B cell (primary cell): ENCODE measurements at regions of chr1 and their contacts with region 1.

Region 1: DNA sequence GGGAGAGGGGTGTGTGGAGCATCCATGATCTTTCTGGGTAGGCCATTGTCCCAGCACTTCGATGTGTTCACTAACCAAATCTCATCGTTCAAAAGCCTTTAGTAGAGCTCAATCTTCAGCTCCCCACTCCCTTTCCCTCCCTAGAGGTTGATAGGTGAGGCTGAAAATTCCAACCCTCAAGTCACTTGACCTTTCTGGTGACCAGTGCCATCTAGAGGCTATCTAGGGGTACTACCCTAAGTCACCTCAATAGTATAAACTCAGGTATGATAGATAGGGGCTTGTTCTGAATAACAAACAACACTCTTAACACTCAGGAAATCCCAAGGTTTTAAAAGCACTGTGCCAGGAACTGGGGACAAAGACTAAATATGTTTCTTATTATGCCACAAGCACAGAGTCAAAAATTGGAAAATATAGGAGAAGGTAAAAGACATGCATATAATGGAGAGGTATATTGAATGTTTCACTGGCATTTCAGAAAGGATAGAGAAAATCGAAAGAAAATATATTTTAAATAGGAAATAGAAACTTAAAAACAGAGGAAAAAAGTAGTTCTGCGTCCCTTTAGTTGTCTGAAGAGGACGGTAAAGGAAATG is 42.9 kb upstream of the CD53 start:
- DNase-seq: peak; percentile 74
- ATAC-seq: peak; percentile 88
- H3K4me3 ChIP-seq: no peak overlapping the region
- H3K4me3 Mint-ChIP-seq: no peak overlapping the region
- H3K27ac ChIP-seq: no peak overlapping the region
- H3K27ac Mint-ChIP-seq: no peak overlapping the region
- H3K4me1 ChIP-seq: peaks cover 8 to 9% of the 10 kb centered on the region in 2 donors
- H3K4me1 Mint-ChIP-seq: peaks cover 30% of the 10 kb centered on the region
- H3K27me3 ChIP-seq: no peaks in the 10 kb centered on the region
- H3K27me3 Mint-ChIP-seq: no peaks in the 10 kb centered on the region
- CTCF ChIP-seq: peak; percentile 94

Region 2: DNA sequence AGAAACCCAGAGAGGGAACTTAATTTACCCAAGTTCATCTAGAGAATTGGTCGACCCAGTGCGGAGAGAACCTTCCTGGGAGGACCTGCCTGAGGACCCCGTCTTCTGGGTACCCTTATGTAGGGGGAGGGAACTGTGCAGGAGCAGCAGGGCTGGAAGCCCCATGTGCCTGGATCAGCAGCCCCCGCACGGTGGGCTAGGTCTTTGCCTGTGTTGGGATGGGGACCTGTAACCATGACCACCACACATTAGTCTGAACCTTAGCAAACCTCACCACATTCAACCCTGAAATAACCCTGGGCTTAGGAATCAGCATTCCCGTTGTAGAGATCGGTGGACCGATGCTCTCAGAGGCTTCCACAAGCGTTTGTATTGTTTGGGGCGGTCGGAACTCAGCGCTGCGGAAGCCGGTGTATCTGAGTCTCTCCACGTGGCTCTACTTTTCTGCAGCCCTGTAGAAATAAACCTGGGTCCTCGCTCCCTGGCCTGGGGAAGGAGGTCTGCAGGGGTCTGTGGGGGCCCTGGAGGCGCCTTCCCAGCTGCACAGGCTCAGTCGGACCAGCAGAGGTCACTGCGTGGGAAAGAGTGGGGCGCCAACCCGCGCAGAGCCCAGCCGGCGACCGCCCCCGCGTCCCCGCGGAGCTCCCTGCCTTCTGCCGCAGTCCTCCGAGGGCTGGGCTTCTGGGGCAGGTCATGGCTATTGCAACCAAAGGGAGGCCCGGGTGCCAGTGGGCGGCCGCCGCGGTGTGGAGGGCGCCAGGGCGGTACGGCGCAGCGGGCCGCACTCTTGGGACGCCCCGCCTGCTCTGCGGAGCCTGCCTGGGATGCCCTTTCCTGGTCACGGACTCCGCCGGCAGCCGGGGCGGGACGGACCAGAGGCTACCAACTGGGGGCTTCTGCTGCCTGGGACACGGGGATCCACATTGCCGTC is 274.9 kb before region 1 on chr1:
- CTCF ChIA-PET with region 1: no interaction called
- POLR2A ChIA-PET with region 1: no interaction called
- intact Hi-C with region 1: loop called (anchors 1 kb)
- DNase-seq: peak; percentile 74
- ATAC-seq: peak; percentile 93
- H3K4me3 ChIP-seq: peak overlapping the region in 2 of 5 experiments; percentile 20 to 27
- H3K4me3 Mint-ChIP-seq: peak overlapping the region; percentile 50
- H3K27ac ChIP-seq: no peak overlapping the region
- H3K27ac Mint-ChIP-seq: no peak overlapping the region
- H3K4me1 ChIP-seq: peaks cover 9 to 12% of the 10 kb centered on the region in 2 donors
- H3K4me1 Mint-ChIP-seq: peaks cover 4% of the 10 kb centered on the region
- H3K27me3 ChIP-seq: peaks cover 0 to 57% (median 24%) of the 10 kb centered on the region in 4 experiments
- H3K27me3 Mint-ChIP-seq: peaks cover 78% of the 10 kb centered on the region
- CTCF ChIP-seq: peak; percentile 83

Region 3: GRCh38 chr1:110630839-110631663 is 199.0 kb before region 1 on chr1:
- CTCF ChIA-PET with region 1: interaction called, 3 read pairs
- POLR2A ChIA-PET with region 1: no interaction called
- intact Hi-C with region 1: loop called (anchors 5 kb)
- DNase-seq: peak; percentile 86
- ATAC-seq: peak; percentile 76
- H3K4me3 ChIP-seq: peak overlapping the region in 2 of 5 experiments; percentile 13 to 28
- H3K4me3 Mint-ChIP-seq: no peak overlapping the region
- H3K27ac ChIP-seq: peak overlapping the region in 1 of 2 donors; percentile 65
- H3K27ac Mint-ChIP-seq: no peak overlapping the region
- H3K4me1 ChIP-seq: peaks cover 56 to 65% of the 10 kb centered on the region in 2 donors
- H3K4me1 Mint-ChIP-seq: peaks cover 43% of the 10 kb centered on the region
- H3K27me3 ChIP-seq: no peaks in the 10 kb centered on the region
- H3K27me3 Mint-ChIP-seq: no peaks in the 10 kb centered on the region
- CTCF ChIP-seq: peak; percentile 88

Region 4: DNA sequence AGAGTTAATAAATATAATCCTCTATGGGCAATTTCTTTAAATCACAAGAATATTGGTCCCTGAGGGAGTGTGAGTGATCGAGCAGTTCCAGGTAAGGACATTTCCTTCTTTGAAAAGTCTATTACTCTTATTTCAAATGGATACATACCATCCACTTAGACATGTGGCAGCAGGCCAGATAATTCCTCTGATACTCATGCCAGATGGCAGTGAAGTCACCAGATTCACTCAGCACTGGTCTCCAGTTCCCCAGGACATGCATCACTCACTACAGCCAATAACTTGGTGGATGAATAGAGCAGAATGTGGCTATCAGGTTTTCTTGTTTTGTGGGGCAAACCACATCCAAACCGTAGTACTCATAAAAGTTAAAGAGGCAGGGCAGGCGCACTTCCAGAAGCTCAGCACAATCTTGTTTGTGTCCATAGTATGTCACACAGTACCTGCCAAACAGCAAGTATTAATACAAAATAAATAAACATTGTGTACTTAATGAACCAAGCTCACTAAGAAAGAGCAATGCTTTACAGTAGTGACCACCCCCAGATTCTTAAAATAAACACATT is 31.3 kb before region 1 on chr1:
- CTCF ChIA-PET with region 1: interaction called, 11 read pairs
- POLR2A ChIA-PET with region 1: no interaction called
- intact Hi-C with region 1: no loop called
- DNase-seq: no peak
- ATAC-seq: no peak
- H3K4me3 ChIP-seq: no peak overlapping the region
- H3K4me3 Mint-ChIP-seq: no peak overlapping the region
- H3K27ac ChIP-seq: no peak overlapping the region
- H3K27ac Mint-ChIP-seq: no peak overlapping the region
- H3K4me1 ChIP-seq: no peaks in the 10 kb centered on the region
- H3K4me1 Mint-ChIP-seq: no peaks in the 10 kb centered on the region
- H3K27me3 ChIP-seq: no peaks in the 10 kb centered on the region
- H3K27me3 Mint-ChIP-seq: no peaks in the 10 kb centered on the region
- CTCF ChIP-seq: no peak

Region 5: DNA sequence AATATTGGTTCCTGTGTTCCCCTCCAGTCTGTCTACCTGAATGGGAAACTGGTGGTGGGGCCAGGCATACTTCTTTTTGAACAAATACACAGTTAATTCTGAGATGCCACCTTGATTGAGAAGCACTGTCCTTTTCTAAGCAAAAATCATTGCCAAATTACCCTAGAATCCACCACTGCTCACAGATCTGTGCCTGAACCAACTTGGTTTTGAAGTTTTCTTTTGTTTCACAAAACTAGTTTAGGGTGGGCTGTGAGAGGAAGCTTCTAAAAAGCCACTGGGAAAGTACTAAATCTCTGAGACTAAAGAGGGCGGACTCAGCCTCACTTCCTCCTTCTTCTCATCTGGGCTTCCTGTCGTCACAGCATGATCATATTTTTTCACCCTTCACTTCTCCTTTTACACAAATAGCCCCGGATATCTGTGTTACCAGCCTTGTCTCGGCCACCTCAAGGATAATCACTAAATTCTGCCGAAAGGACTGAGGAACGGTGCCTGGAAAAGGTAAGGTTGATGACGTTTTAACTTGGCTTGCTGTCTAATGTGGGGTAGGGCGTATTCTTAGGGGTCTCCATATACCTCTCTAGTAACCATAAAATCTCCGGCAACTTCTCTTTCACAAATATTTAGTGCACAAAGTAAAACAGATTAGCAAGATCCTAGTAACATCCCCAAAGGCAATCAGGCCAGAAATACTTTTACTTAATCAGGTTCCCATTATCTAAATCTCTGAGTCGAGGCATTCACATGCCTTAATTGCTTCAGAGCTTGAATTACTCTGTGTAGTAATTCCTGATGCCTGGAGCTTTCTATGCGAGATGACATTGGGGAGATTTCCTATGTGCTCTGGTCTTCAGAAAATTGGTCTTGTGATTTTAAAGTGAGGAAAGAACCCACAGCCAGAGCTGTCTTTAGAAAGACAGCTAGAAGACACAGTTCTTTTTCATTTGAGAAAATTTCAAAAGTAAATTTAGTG is 43.0 kb after region 1 on chr1 and contains the start of gene CD53:
- CTCF ChIA-PET with region 1: interaction called, 11 read pairs
- POLR2A ChIA-PET with region 1: interaction called, 3 read pairs
- intact Hi-C with region 1: loop called (anchors 2 kb)
- DNase-seq: peak; percentile 92
- ATAC-seq: peak; percentile 66
- H3K4me3 ChIP-seq: peak within 1 kb of the TSS; percentile 73 to 100 (median 97)
- H3K4me3 Mint-ChIP-seq: peak within 1 kb of the TSS; percentile 99
- H3K27ac ChIP-seq: peak within 1 kb of the TSS; percentile 96 to 99
- H3K27ac Mint-ChIP-seq: peak within 1 kb of the TSS; percentile 99
- H3K4me1 ChIP-seq: peaks cover 60% of the 10 kb centered on the region in 2 donors
- H3K4me1 Mint-ChIP-seq: peaks cover 70% of the 10 kb centered on the region
- H3K27me3 ChIP-seq: no peaks in the 10 kb centered on the region
- H3K27me3 Mint-ChIP-seq: no peaks in the 10 kb centered on the region
- CTCF ChIP-seq: no peak
- total RNA-seq, gene CD53: 490 and 495 TPM in 2 replicates

Region 6: GRCh38 chr1:110986407-110986891 is 156.4 kb after region 1 on chr1:
- CTCF ChIA-PET with region 1: interaction called, 10 read pairs
- POLR2A ChIA-PET with region 1: no interaction called
- intact Hi-C with region 1: no loop called
- DNase-seq: no peak
- ATAC-seq: no peak
- H3K4me3 ChIP-seq: no peak overlapping the region
- H3K4me3 Mint-ChIP-seq: no peak overlapping the region
- H3K27ac ChIP-seq: no peak overlapping the region
- H3K27ac Mint-ChIP-seq: no peak overlapping the region
- H3K4me1 ChIP-seq: peaks cover 0 to 8% of the 10 kb centered on the region in 2 donors
- H3K4me1 Mint-ChIP-seq: peaks cover 7% of the 10 kb centered on the region
- H3K27me3 ChIP-seq: peaks cover 0 to 10% (median 4%) of the 10 kb centered on the region in 4 experiments
- H3K27me3 Mint-ChIP-seq: peaks cover 25% of the 10 kb centered on the region
- CTCF ChIP-seq: no peak